OCI-LY7 (cell line): ENCODE measurements at regions of chr1 and their contacts with region 1.

Region 1: GRCh38 chr1:194295685-194296084 is 1109.3 kb upstream of the B3GALT2 start:
- DNase-seq: peak; percentile 83
- H3K4me3 ChIP-seq: no peak overlapping the region
- H3K27ac ChIP-seq: no peak overlapping the region
- H3K4me1 ChIP-seq: peaks cover 20% of the 10 kb centered on the region
- CTCF ChIP-seq: peak; percentile 92

Region 2: DNA sequence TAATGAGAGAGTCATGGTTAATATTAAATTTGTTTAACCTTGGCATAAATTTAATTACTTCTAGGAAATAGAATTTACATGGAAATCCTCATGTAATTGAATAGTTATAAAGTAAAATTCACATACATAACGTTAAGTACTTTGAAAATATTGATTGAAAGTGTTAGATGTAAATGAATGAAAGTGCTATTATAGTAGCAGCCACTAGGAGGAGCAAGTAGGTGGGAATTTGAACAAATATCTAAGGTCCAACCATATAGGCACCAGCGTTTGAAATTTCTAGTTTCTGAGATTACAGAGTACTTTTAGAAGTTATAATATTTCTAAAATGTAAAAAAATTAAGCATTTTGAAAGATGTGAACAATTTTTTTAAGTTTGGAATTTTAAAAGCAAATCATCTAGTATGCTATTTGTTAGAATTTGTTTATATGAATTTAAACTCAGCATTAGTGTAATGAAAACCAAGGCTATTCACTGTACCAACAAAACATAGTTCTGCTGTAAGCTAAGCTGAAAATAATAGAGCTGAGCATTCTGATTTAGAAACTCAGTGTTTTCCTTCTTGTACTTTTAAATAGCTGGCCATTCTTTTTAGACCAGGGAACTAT is 1112.6 kb before region 1 on chr1:
- CTCF ChIA-PET with region 1: no interaction called
- POLR2A ChIA-PET with region 1: no interaction called
- intact Hi-C with region 1: loop called (anchors 5 kb)
- DNase-seq: peak; percentile 56
- H3K4me3 ChIP-seq: no peak overlapping the region
- H3K27ac ChIP-seq: no peak overlapping the region
- H3K4me1 ChIP-seq: no peaks in the 10 kb centered on the region
- CTCF ChIP-seq: peak; percentile 98

Region 3: DNA sequence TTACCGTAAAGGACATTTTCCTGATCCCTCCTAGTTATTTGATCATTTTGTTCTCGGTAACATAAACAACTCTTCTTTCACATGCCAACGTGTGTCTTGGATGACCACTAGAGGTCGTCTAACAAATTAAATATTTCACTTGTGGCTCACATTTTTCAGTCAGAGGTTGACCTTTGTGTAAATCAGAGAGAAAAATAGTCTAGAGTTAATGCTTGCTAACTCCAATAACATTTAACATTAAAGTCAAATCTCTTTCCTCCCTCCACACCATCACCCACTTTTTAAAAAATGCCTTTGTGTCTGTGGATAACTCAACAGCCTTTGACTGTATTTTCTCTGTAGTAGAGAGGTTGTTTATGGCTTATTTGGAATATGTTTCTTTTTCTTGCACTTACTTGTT is 888.8 kb before region 1 on chr1:
- CTCF ChIA-PET with region 1: no interaction called
- POLR2A ChIA-PET with region 1: no interaction called
- intact Hi-C with region 1: loop called (anchors 5 kb)
- DNase-seq: peak; percentile 77
- H3K4me3 ChIP-seq: no peak overlapping the region
- H3K27ac ChIP-seq: no peak overlapping the region
- H3K4me1 ChIP-seq: no peaks in the 10 kb centered on the region
- CTCF ChIP-seq: peak; percentile 97

Region 4: DNA sequence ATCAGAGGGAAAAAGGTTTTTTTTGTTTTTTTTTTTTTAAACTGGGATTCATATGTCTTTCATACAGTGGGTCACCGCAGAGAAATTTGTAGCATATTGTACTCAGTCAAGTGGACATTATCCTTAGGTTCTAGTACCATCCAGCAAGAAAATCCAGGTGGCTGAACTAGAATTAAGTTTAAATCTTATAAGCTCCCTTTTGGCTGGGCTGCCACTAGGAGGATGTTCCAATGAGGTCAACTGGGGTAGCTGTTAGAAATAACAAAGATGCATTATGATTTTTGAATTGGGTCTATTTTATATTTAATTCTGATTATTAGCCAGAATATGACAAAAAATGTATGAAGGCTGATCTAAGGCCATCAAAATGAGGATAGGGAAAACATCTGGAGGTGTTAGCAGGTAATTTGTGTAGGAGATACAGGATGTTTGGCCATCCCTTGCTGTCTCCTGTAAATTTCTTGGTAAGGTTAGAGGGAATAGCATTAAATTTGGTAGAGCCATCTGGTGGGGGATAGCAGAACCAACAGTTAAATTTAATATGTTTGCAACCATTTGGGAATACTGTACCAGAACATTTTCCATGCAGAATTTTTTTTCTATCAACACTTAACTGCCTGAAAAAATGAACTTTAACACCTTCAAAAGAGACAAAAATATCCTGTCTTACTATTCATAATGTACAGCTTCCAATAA is 540.8 kb before region 1 on chr1:
- CTCF ChIA-PET with region 1: no interaction called
- POLR2A ChIA-PET with region 1: no interaction called
- intact Hi-C with region 1: loop called (anchors 10 kb)
- DNase-seq: peak; percentile 4
- H3K4me3 ChIP-seq: no peak overlapping the region
- H3K27ac ChIP-seq: no peak overlapping the region
- H3K4me1 ChIP-seq: no peaks in the 10 kb centered on the region
- CTCF ChIP-seq: peak; percentile 72

Region 5: DNA sequence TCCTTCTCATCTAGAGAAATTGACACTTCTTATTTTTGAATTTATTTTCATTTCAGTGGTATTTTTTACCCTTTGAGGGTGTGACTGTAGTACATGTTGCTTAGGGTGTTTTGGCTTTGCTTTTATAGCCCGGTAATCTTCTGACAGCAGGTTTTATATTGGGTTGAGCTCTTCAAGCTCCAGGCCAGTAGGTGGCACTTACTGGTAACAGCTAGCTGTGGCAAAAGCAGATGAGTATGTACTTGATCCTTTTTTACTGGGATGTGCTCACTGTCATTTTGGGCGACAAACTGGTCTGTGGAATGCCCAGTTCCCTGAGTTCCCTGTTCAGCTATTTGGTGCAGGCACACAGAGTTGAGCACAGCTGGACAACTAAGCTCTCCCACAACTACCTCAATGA is 193.1 kb before region 1 on chr1:
- CTCF ChIA-PET with region 1: no interaction called
- POLR2A ChIA-PET with region 1: interaction called, 3 read pairs
- intact Hi-C with region 1: loop called (anchors 1 kb)
- DNase-seq: peak; percentile 61
- H3K4me3 ChIP-seq: no peak overlapping the region
- H3K27ac ChIP-seq: no peak overlapping the region
- H3K4me1 ChIP-seq: no peaks in the 10 kb centered on the region
- CTCF ChIP-seq: peak; percentile 75

Region 6: GRCh38 chr1:194431135-194431534 is 135.4 kb after region 1 on chr1:
- CTCF ChIA-PET with region 1: no interaction called
- POLR2A ChIA-PET with region 1: no interaction called
- intact Hi-C with region 1: no loop called
- DNase-seq: no peak
- H3K4me3 ChIP-seq: no peak overlapping the region
- H3K27ac ChIP-seq: no peak overlapping the region
- H3K4me1 ChIP-seq: no peaks in the 10 kb centered on the region
- CTCF ChIP-seq: no peak